ENCODE measurements at regions of chr1 and their contacts with region 1.

Region 1: GRCh38 chr1:226940029-226940805 is at the start of gene COQ8A:
- DNase-seq: peak; percentile 99
- H3K4me3 ChIP-seq: peak within 1 kb of the TSS; percentile 40 to 63 (median 54)
- H3K27ac ChIP-seq: peak within 1 kb of the TSS; percentile 46
- H3K4me1 ChIP-seq: peaks cover 7% of the 10 kb centered on the region
- H3K27me3 ChIP-seq: no peaks in the 10 kb centered on the region
- CTCF ChIP-seq: no peak
- POLR2A ChIP-seq: no peak
- total RNA-seq, gene COQ8A: 7.3 and 9.4 TPM in 2 replicates

Region 2: DNA sequence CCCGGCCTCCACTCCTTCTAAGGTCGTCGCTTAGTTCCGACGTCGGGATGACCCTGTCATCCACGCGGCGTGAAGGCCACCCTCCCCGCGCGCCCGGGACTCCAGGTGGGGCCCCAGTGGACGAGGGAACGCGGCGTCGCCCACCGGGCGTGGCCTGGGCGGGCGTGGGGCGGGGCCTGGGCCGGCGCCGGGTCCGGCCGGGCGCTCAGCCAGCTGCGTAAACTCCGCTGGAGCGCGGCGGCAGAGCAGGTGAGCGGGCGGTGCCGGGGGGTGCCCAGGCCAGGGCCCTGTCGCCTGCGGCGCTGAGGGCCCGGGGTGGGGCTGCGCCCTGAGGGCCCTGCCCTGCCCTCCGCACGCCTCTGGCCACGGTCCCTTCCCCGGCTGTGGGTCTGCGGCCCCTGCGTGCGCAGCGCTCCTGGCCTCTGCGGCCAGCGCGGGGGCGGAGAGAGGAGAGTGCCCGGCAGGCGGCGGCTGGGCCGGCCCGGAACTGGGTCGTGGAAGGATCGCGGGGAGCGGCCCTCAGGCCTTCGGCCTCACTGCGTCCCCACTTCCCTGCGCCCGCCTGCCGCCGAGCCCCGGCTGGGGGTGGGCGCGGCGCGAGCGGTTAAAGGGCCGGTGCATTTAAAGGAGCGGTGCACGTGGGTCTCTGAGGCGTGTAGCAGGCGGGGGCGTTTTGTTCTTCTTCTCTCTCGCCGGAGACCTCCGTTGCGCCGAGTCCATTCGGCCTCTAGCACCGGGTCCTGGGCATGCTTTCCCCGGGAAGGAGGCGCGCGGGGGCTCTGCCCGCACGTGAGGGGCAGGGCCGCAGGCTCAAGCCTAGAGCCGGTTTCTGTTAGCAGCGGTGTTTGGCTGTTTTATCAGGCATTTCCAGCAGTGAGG is 69.6 kb before region 1 on chr1 and contains the start of gene PSEN2:
- CTCF ChIA-PET with region 1: no interaction called
- POLR2A ChIA-PET with region 1: no interaction called
- dilution Hi-C with region 1: no loop called
- intact Hi-C with region 1: loop called (anchors 1 kb)
- DNase-seq: peak; percentile 51
- H3K4me3 ChIP-seq: peak within 1 kb of the TSS; percentile 55 to 65 (median 61)
- H3K27ac ChIP-seq: no peak within 1 kb of the TSS
- H3K4me1 ChIP-seq: peaks cover 16% of the 10 kb centered on the region
- H3K27me3 ChIP-seq: no peaks in the 10 kb centered on the region
- CTCF ChIP-seq: peak in 1 of 2 donors; percentile 27
- POLR2A ChIP-seq: no peak
- total RNA-seq, gene PSEN2: 12.5 and 17.1 TPM in 2 replicates

Region 3: GRCh38 chr1:226903819-226904716 is 36.1 kb before region 1 on chr1:
- CTCF ChIA-PET with region 1: no interaction called
- POLR2A ChIA-PET with region 1: no interaction called
- dilution Hi-C with region 1: no loop called
- intact Hi-C with region 1: no loop called
- DNase-seq: no peak
- H3K4me3 ChIP-seq: no peak overlapping the region
- H3K27ac ChIP-seq: no peak overlapping the region
- H3K4me1 ChIP-seq: no peaks in the 10 kb centered on the region
- H3K27me3 ChIP-seq: no peaks in the 10 kb centered on the region
- CTCF ChIP-seq: no peak
- POLR2A ChIP-seq: no peak

Region 4: GRCh38 chr1:226990133-226990716 is 50.0 kb after region 1 on chr1:
- CTCF ChIA-PET with region 1: interaction called, 3 read pairs
- POLR2A ChIA-PET with region 1: no interaction called
- dilution Hi-C with region 1: no loop called
- intact Hi-C with region 1: loop called (anchors 5 kb)
- DNase-seq: peak; percentile 73
- H3K4me3 ChIP-seq: no peak overlapping the region
- H3K27ac ChIP-seq: peak overlapping the region; percentile 23
- H3K4me1 ChIP-seq: peaks cover 23% of the 10 kb centered on the region
- H3K27me3 ChIP-seq: no peaks in the 10 kb centered on the region
- CTCF ChIP-seq: no peak
- POLR2A ChIP-seq: no peak